PC-9 (cell line): ENCODE measurements at regions of chr5 and their contacts with region 1.

Region 1: GRCh38 chr5:39547553-39548154 is 122.9 kb upstream of the DAB2 start:
- DNase-seq: peak; percentile 50
- H3K4me3 ChIP-seq: no peak overlapping the region
- H3K27ac ChIP-seq: no peak overlapping the region
- H3K4me1 ChIP-seq: peaks cover 16% of the 10 kb centered on the region
- H3K27me3 ChIP-seq: no peaks in the 10 kb centered on the region
- CTCF ChIP-seq: peak; percentile 95

Region 2: DNA sequence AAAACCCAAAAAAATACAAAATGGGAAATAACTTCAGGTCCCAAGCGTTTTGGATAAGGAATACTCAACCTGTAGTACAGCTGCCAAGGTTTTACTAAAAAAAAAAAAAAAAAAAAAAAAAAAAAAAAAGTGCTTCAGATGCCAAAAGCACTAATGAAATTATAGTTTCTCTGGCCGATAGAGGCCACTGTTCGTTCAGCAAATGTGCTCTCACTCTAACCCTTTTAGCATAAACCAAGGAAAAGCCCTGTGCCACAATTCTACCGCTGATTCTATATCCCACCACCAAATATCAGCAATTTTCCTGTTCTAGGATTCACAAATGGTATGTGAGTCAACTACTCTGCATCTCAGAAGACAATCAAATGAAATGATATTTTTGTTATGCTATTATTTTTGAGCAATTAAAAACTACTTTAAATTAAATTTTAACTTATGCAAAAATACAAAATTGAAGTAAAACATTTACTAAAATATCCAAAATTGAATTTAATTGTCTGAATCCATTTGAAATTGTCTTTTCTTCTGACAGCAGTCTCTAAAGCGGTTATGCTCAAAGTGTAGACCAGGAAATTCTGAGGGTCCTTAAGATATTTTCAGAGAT is 553.2 kb before region 1 on chr5:
- CTCF ChIA-PET with region 1: interaction called, 4 read pairs
- POLR2A ChIA-PET with region 1: no interaction called
- intact Hi-C with region 1: loop called (anchors 1 kb)
- DNase-seq: peak; percentile 50 to 73
- H3K4me3 ChIP-seq: no peak overlapping the region
- H3K27ac ChIP-seq: no peak overlapping the region
- H3K4me1 ChIP-seq: no peaks in the 10 kb centered on the region
- H3K27me3 ChIP-seq: no peaks in the 10 kb centered on the region
- CTCF ChIP-seq: peak; percentile 80

Region 3: DNA sequence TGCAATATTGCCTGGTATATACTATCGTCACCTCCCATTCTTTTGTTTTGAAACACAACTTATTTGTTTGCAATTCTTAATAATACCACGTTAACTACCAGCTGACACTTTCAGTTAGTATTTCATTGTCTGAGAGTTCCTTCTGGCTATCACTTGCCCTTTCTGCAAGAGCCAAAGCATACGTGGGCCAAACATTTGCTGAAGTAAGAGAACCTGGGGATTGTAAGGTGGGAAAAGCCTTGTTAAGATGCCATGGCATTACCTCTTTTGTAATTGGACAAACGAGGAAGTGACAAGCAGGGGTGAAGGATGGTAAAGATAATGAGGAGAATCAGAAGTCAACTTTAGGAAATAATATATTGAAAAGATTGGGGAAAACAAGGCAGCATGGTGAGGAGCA is 376.0 kb before region 1 on chr5:
- CTCF ChIA-PET with region 1: no interaction called
- POLR2A ChIA-PET with region 1: interaction called, 11 read pairs
- intact Hi-C with region 1: no loop called
- DNase-seq: no peak
- H3K4me3 ChIP-seq: no peak overlapping the region
- H3K27ac ChIP-seq: no peak overlapping the region
- H3K4me1 ChIP-seq: peaks cover 14% of the 10 kb centered on the region
- H3K27me3 ChIP-seq: no peaks in the 10 kb centered on the region
- CTCF ChIP-seq: no peak

Region 4: DNA sequence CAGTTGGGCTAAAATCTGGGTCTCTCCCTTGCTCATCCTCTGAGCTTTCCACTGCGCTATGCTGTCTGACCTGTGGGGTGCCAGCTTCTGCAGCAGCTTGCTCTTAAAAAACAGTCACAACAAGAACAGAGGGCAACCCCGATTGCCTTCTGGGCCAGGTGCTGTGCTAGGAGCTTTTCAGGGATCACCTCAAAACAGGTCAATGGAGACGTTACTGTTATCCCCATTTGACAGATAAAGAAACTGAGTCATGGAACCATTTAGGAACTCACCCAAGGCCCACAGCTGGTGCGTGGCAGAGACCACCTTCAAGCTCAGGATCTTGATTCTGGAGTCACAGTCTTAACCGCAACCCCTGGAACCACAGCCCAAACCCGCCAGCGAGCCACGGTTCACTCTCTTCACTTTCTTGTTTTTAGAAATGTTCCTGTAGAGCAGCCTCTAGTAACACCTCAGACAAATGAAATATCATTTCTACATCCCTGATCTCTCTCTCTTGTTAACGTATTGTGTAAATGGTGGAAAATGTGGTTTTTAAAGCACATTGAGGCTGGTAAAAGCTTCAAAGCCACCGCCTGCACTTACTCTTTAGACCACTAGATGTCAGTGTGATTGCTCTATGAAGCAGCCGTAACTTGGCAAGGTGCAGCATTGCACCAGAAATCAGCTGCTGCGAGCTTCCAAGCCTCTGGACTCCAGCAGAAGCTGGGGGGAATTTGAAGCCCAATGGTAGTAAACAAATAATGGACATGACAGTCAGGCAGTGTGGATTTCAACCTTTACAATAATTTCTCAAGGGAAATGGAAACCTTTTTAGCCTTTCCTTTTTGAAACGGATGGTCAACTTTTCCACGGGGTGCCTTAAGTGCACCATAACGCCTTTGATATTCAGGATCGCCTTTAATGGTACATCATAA is 330.0 kb before region 1 on chr5:
- CTCF ChIA-PET with region 1: interaction called, 17 read pairs
- POLR2A ChIA-PET with region 1: interaction called, 7 read pairs
- intact Hi-C with region 1: loop called (anchors 1 kb)
- DNase-seq: peak; percentile 80
- H3K4me3 ChIP-seq: no peak overlapping the region
- H3K27ac ChIP-seq: peak overlapping the region; percentile 69
- H3K4me1 ChIP-seq: peaks cover 52% of the 10 kb centered on the region
- H3K27me3 ChIP-seq: no peaks in the 10 kb centered on the region
- CTCF ChIP-seq: peak; percentile 99

Region 5: DNA sequence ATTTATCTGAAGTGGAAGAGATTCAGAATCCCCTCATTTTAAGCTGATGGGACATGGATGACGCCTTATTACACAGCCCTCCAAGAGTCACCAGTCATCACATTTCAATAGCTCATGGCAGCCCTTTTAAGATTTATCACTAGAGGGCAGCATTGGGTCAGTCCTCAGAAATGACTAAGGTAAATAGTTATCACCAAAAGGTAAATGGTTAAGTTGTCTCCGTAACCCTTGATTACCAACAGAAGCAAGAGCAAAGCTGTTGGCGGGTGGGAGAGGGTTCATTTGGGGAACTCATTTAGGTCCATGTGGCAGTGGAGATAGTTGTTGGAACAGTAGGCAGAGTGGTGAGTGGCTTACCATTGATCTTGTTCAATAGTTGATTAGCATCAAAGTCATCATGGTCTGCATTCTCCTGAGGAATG is 171.3 kb before region 1 on chr5:
- CTCF ChIA-PET with region 1: interaction called, 104 read pairs
- POLR2A ChIA-PET with region 1: interaction called, 8 read pairs
- intact Hi-C with region 1: loop called (anchors 1 kb)
- DNase-seq: peak; percentile 63 to 66
- H3K4me3 ChIP-seq: no peak overlapping the region
- H3K27ac ChIP-seq: no peak overlapping the region
- H3K4me1 ChIP-seq: no peaks in the 10 kb centered on the region
- H3K27me3 ChIP-seq: no peaks in the 10 kb centered on the region
- CTCF ChIP-seq: peak; percentile 96

Region 6: DNA sequence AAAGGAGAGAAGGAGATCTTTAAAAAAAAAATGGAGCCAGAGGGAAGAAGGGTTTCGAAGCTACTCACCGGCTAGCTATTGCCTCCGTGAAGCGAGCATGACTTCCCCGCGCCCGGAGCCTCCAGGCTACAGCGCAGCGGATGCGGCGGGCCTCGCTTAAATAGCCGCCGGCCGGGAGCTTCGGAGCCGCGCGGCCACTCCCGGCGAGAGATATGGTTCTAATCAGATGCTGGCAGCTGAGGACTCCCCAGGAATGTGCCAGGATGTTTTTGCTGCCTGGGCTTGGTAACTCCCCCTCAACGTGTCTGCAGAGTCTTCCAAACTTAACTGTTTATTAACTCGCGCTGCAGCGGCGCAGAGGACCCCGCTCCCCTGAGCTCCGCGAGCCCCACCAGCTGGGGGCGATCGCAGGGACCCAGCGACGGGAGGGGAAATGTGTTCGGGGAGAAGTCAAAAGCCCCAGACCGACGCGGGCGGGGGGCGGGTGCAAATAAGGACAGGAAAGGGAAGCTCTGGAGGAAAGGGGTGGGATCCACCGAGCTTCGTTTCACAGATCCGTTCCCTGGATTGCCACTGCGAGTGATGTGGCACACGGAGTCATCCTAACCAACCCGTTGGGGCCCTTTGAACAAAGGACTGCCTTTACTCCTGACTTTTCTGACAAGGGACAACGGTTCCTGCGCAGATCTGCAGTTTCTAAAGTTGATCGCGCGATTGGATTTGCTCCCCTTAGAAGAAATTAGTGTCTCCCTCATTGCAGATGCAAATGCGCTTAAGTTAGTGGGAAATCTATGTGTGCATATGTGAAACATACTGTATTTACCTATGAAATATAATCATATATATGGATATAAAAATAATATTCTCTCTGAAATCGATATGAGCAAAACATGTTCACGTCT is 122.7 kb before region 1 on chr5 and contains the start of gene DAB2:
- CTCF ChIA-PET with region 1: interaction called, 13 read pairs
- POLR2A ChIA-PET with region 1: interaction called, 23 read pairs
- intact Hi-C with region 1: loop called (anchors 1 kb)
- DNase-seq: peak; percentile 80 to 92
- H3K4me3 ChIP-seq: peak within 1 kb of the TSS; percentile 72
- H3K27ac ChIP-seq: peak within 1 kb of the TSS; percentile 49
- H3K4me1 ChIP-seq: peaks cover 28% of the 10 kb centered on the region
- H3K27me3 ChIP-seq: no peaks in the 10 kb centered on the region
- CTCF ChIP-seq: peak; percentile 64
- total RNA-seq, gene DAB2: 21.0 and 25.8 TPM in 2 replicates

Region 7: DNA sequence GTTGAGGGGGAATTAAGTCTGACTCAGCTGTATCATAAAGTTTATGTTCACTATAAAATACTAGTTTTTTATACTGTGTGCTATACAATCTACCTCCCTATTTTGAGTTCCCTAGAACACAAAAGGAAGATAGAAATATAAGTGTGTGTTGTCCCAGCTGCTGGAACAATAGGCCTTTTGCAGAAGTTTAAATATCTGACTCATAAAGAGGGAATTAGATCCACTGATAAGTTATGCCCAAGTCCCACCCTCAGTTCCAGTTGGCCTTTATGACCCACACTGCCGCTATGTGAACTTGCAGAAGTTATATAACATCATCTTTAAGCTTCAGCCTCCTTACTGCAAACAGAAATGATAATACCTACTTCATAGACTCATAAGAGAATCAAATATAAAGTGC is 34.4 kb before region 1 on chr5:
- CTCF ChIA-PET with region 1: no interaction called
- POLR2A ChIA-PET with region 1: no interaction called
- intact Hi-C with region 1: loop called (anchors 2 kb)
- DNase-seq: peak; percentile 55 to 70
- H3K4me3 ChIP-seq: no peak overlapping the region
- H3K27ac ChIP-seq: no peak overlapping the region
- H3K4me1 ChIP-seq: peaks cover 16% of the 10 kb centered on the region
- H3K27me3 ChIP-seq: no peaks in the 10 kb centered on the region
- CTCF ChIP-seq: no peak